CD4-positive, alpha-beta memory T cell (primary cell): ENCODE measurements at regions of chr14 and their contacts with region 1.

Region 1: GRCh38 chr14:77028384-77029231 is at the start of gene IRF2BPL:
- DNase-seq: peak; percentile 95 to 96 (median 95)
- H3K4me3 ChIP-seq: peak within 1 kb of the TSS; percentile 57 to 80
- H3K4me3 Mint-ChIP-seq: peak within 1 kb of the TSS; percentile 93 to 97 (median 95)
- H3K27ac ChIP-seq: peak within 1 kb of the TSS; percentile 93
- H3K27ac Mint-ChIP-seq: peak within 1 kb of the TSS; percentile 97 to 100 (median 98)
- H3K4me1 ChIP-seq: peaks cover 77% of the 10 kb centered on the region
- H3K4me1 Mint-ChIP-seq: peaks cover 37 to 72% (median 52%) of the 10 kb centered on the region in 4 donors
- H3K27me3 ChIP-seq: no peaks in the 10 kb centered on the region
- H3K27me3 Mint-ChIP-seq: no peaks in the 10 kb centered on the region
- total RNA-seq, gene IRF2BPL: 36.6 to 37.7 TPM

Region 2: GRCh38 chr14:76926521-76927251 is 101.9 kb before region 1 on chr14:
- CTCF ChIA-PET with region 1: no interaction called
- POLR2A ChIA-PET with region 1: interaction called, 38 read pairs
- intact Hi-C with region 1: loop called (anchors 1 kb)
- DNase-seq: peak; percentile 75 to 96 (median 83)
- H3K4me3 ChIP-seq: peak overlapping the region; percentile 3 to 51
- H3K4me3 Mint-ChIP-seq: peak overlapping the region; percentile 71 to 90 (median 82)
- H3K27ac ChIP-seq: peak overlapping the region; percentile 89
- H3K27ac Mint-ChIP-seq: peak overlapping the region; percentile 83 to 99 (median 97)
- H3K4me1 ChIP-seq: peaks cover 78% of the 10 kb centered on the region
- H3K4me1 Mint-ChIP-seq: peaks cover 59 to 97% (median 80%) of the 10 kb centered on the region in 4 donors
- H3K27me3 ChIP-seq: no peaks in the 10 kb centered on the region
- H3K27me3 Mint-ChIP-seq: no peaks in the 10 kb centered on the region

Region 3: GRCh38 chr14:76956316-76957090 is 72.1 kb before region 1 on chr14:
- CTCF ChIA-PET with region 1: interaction called, 18 read pairs
- POLR2A ChIA-PET with region 1: interaction called, 132 read pairs
- intact Hi-C with region 1: loop called (anchors 1 kb)
- DNase-seq: peak; percentile 83 to 97 (median 85)
- H3K4me3 ChIP-seq: peak overlapping the region; percentile 61 to 64
- H3K4me3 Mint-ChIP-seq: peak overlapping the region; percentile 81 to 96 (median 88)
- H3K27ac ChIP-seq: peak overlapping the region; percentile 94
- H3K27ac Mint-ChIP-seq: peak overlapping the region; percentile 87 to 99 (median 98)
- H3K4me1 ChIP-seq: peaks cover 72% of the 10 kb centered on the region
- H3K4me1 Mint-ChIP-seq: peaks cover 37 to 75% (median 53%) of the 10 kb centered on the region in 4 donors
- H3K27me3 ChIP-seq: no peaks in the 10 kb centered on the region
- H3K27me3 Mint-ChIP-seq: no peaks in the 10 kb centered on the region

Region 4: DNA sequence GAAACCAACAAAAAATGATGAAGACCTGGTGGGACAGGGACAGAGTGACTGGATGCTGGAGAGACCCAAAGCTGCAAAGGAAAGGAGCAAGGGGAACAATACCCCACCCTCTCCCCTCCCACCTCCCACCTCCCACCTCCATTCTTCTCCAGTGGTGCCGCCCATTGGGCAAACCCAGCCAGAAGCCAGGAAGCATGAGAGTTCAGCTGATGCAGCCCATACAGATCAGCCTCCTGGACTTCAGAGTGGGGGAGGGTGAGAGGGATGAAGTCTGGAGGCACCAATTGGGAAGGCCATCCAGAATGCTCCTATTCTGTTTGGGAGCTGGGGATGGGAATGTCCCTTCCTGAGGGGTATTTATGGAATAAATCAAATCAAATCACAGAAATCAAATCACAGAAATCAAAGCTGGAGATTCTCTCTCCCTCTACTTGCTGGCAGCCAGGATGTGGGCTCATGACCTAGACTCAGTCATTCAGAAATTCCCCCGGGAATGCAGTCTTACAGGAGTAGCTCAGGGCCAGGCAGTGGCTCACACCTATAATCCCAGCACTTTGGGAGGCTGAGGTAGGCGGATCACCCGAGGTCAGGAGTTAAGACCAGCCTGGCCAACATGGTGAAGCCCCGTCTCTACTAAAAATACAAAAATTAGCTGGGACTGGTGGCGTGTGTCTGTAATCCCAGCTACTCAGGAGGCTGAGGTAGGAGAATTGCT is 31.2 kb before region 1 on chr14:
- CTCF ChIA-PET with region 1: no interaction called
- POLR2A ChIA-PET with region 1: interaction called, 11 read pairs
- intact Hi-C with region 1: no loop called
- DNase-seq: no peak
- H3K4me3 ChIP-seq: no peak overlapping the region
- H3K4me3 Mint-ChIP-seq: no peak overlapping the region
- H3K27ac ChIP-seq: no peak overlapping the region
- H3K27ac Mint-ChIP-seq: no peak overlapping the region
- H3K4me1 ChIP-seq: no peaks in the 10 kb centered on the region
- H3K4me1 Mint-ChIP-seq: peaks cover 0 to 3% (median under 1%) of the 10 kb centered on the region in 4 donors
- H3K27me3 ChIP-seq: no peaks in the 10 kb centered on the region
- H3K27me3 Mint-ChIP-seq: no peaks in the 10 kb centered on the region

Region 5: GRCh38 chr14:77053046-77053841 is 24.6 kb after region 1 on chr14:
- CTCF ChIA-PET with region 1: interaction called, 65 read pairs
- POLR2A ChIA-PET with region 1: interaction called, 456 read pairs
- intact Hi-C with region 1: loop called (anchors 1 kb)
- DNase-seq: peak; percentile 68 to 75 (median 69)
- H3K4me3 ChIP-seq: no peak overlapping the region
- H3K4me3 Mint-ChIP-seq: peak overlapping the region in 1 of 8 donors; percentile 51
- H3K27ac ChIP-seq: no peak overlapping the region
- H3K27ac Mint-ChIP-seq: peak overlapping the region in 6 of 7 donors; percentile 24 to 79 (median 49)
- H3K4me1 ChIP-seq: peaks cover 25% of the 10 kb centered on the region
- H3K4me1 Mint-ChIP-seq: peaks cover 16 to 36% (median 22%) of the 10 kb centered on the region in 4 donors
- H3K27me3 ChIP-seq: no peaks in the 10 kb centered on the region
- H3K27me3 Mint-ChIP-seq: no peaks in the 10 kb centered on the region

Region 6: DNA sequence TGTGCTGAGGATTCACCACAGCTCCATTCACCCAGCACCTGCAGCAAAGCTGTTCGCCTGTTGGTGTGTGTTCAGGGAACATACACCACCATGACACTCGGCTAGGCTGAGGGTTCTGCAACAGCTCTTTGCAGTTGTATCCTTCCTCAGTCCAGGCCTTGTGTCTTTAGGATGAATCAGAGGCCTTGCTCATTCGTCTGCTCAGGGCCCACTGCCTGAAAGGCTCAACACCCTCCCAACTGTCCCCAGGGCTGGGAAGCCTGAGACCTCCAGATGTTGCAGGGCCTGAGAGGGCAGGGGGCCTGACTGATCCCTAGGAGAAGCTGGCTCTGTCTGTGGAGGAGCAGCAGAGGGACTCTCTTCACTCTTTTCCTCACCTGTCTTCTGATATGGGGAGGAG is 101.8 kb after region 1 on chr14:
- CTCF ChIA-PET with region 1: no interaction called
- POLR2A ChIA-PET with region 1: no interaction called
- intact Hi-C with region 1: no loop called
- DNase-seq: no peak
- H3K4me3 ChIP-seq: no peak overlapping the region
- H3K4me3 Mint-ChIP-seq: no peak overlapping the region
- H3K27ac ChIP-seq: no peak overlapping the region
- H3K27ac Mint-ChIP-seq: no peak overlapping the region
- H3K4me1 ChIP-seq: peaks cover 3% of the 10 kb centered on the region
- H3K4me1 Mint-ChIP-seq: peaks cover 2 to 14% (median 5%) of the 10 kb centered on the region in 4 donors
- H3K27me3 ChIP-seq: peaks cover 3% of the 10 kb centered on the region
- H3K27me3 Mint-ChIP-seq: peaks cover 31 to 52% of the 10 kb centered on the region in 2 donors